Left colon (tissue), 2 donors: ENCODE measurements at regions of chr10 and their contacts with region 1.

Region 1: DNA sequence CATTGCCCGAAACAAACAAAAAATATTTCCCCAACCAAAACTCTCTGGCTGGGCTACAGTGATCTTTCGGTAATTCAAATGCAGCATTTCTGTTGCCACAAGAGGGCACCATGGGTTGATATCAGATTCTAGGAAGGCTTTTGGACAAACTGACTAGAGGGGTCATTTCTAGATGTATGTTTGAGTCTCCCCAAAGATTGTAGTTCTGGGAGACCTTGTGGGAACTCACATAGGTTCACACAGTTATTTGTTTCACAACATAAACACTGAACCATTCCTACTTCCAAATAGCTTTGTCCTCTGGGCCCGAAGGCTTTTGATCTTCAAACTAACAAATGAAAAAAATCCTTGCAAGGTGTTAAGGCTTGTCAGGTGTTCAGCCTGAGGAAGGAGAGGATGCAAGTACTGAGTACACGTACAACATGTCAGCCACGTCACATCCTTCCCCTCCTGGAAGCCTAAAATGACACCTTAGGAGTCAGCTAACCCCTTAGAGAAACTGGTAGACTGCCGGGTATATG is 37.0 kb upstream of the IL15RA start:
- DNase-seq: peak in 1 of 2 donors; percentile 73
- ATAC-seq: peak; percentile 39

Region 2: DNA sequence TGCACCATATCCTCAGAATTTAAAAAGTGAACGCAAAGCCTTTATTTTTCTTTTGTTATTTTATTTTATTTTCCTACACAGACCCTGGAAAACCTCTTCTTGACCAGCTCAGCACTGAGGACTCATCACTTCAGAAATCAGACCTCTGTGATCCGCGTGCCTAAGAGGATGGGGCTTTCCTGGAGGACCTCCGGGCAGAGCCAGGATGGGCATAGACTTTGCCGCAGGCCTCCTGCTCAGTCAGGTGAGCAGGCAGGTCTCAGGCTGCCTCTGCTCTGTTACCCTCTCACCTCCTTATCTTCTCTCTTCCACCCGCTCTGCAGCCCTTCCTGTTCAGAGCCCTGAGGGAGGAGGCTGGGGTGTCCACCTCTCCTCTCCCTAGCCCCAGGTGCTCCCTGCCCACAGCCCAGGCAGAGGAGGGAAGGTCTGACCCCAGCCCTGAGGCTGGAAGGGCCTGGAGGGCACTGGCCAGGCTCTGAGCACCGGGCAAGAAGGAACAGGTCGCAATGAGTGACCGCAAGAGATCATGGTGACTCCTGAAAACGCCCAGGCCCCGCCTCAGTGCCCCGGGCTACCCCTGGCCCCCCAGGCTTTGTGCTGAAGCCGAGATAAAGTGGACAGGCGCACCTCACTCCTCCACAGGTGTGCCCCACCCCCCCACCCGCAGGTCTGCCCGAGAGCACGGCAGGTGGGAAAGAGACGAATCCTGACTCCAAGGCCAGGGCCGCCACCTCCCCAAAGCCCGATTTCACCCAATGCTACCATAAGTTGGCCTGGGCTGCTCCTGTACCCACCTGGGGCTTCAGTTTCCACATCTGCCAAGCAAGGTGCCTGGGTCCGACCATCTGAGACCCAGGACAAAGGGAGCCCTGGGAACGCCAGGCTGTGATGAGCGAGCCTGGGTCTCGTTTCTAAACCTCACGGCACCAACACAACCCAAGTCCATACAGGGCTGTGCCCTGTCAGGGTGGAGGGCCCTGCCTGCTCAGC is 517.7 kb before region 1 on chr10:
- intact Hi-C with region 1: no loop called
- DNase-seq: peak in 1 of 2 donors; percentile 19
- ATAC-seq: no peak

Region 3: GRCh38 chr10:6088721-6089390 is 74.6 kb after region 1 on chr10 and contains the start of gene RBM17:
- intact Hi-C with region 1: loop called in 1 of 2 experiments (anchors 10 kb)
- DNase-seq: peak; percentile 95 to 96
- ATAC-seq: peak; percentile 90
- total RNA-seq, gene RBM17: 71.7 to 90.7 TPM